Panc1 (cell line): ENCODE measurements at regions of chr7 and their contacts with region 1.

Region 1: GRCh38 chr7:22269963-22270362 is 87.0 kb downstream of the RAPGEF5 start:
- DNase-seq: no peak
- ATAC-seq: no peak
- H3K4me3 ChIP-seq: no peak overlapping the region
- H3K27ac ChIP-seq: no peak overlapping the region
- H3K4me1 ChIP-seq: no peaks in the 10 kb centered on the region
- H3K27me3 ChIP-seq: no peaks in the 10 kb centered on the region
- CTCF ChIP-seq: no peak

Region 2: DNA sequence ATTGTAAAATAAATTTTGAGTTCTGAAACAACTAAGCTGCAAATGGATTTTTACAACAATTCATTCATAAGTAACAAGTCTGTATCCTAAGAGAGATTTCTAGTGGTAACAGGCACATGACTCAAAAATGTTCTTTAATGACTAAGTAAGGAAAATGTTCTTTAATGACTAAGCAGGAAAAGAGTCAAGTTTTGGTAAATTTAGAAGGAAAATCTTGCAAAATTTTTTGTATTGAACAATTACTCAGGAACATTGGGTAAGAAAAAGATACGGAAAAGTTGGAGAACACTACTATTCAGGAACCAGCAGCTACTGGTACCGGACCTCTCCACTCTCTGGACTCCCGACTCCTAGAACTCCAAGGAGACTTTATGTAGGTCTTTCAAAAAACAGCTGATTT is 710.5 kb after region 1 on chr7:
- CTCF ChIA-PET with region 1: no interaction called
- POLR2A ChIA-PET with region 1: interaction called, 15 read pairs
- in situ Hi-C with region 1: no loop called
- intact Hi-C with region 1: no loop called
- DNase-seq: no peak
- ATAC-seq: no peak
- H3K4me3 ChIP-seq: no peak overlapping the region
- H3K27ac ChIP-seq: no peak overlapping the region
- H3K4me1 ChIP-seq: no peaks in the 10 kb centered on the region
- H3K27me3 ChIP-seq: no peaks in the 10 kb centered on the region
- CTCF ChIP-seq: no peak